ENCODE measurements at regions of chr5 and their contacts with region 1.

Region 1: DNA sequence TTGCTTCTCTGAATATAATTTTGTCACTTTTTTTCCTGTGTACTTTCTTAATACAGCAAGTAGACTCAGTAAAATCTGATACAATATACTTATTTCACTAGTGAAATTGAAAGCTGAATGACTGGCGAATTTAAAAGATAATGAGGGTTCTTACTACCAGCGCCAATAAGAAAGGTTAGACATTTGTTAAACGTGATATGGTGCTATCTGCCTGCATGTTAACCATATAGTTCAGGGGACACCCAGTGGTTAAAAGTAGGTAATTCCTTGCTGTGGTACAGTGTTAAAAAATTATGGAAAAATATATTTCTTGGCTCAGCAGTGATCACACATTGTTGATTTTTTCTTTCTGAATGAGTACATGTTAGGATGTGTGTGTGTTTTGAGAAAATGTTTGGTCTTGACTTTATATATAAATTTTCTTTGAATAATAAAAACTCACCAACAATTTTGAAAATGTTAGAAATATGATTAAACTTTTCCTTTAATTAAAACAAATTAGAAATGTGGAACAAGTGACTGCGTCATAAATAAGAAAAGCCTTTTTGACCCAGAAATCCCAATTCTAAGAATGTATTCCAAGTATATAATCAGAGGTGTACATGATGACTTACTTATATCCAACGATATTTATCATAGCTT is 25.8 kb downstream of the CAST start:
- DNase-seq: peak in 2 of 4 donors; percentile 36 to 46
- ATAC-seq: peak; percentile 84
- H3K4me3 ChIP-seq: no peak overlapping the region
- H3K27ac ChIP-seq: no peak overlapping the region
- H3K4me1 ChIP-seq: peaks cover 6 to 23% of the 10 kb centered on the region in 2 donors
- H3K27me3 ChIP-seq: no peaks in the 10 kb centered on the region
- CTCF ChIP-seq: peak; percentile 32 to 43

Region 2: GRCh38 chr5:96226941-96227552 is 460.9 kb before region 1 on chr5:
- intact Hi-C with region 1: no loop called
- DNase-seq: peak in 2 of 4 donors; percentile 26 to 53
- ATAC-seq: peak; percentile 71
- H3K4me3 ChIP-seq: no peak overlapping the region
- H3K27ac ChIP-seq: peak overlapping the region in 1 of 2 donors; percentile 35
- H3K4me1 ChIP-seq: no peaks in the 10 kb centered on the region
- H3K27me3 ChIP-seq: no peaks in the 10 kb centered on the region
- CTCF ChIP-seq: no peak

Region 3: DNA sequence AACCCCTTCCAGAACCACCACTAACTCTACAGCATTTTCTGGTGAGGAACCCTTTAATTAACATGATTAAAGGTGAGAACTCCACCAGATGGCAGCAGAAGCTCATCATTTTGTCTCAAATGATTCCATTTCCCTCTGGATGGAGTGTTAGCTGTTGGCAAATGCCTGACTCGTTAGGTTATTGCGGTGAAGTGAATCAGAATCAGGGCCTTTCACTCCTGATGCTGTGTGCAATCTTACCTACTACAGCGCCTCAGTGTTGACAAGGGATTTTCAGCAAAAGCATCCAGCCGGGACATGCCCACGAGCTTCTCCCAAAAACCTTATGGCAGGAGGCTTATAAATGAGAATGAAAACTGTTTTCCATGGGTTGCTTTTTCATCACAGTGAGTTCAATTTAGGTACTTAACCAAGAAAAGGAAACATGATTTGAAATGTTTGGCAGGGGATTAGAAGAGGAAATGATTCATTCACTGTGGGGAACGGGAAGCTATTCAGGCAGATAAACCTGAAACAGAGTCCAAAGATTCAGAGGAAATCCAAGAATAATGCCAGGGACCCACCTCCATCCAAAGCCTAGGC is 73.7 kb before region 1 on chr5:
- intact Hi-C with region 1: loop called in 1 of 2 experiments (anchors 10 kb)
- DNase-seq: peak in 3 of 4 donors; percentile 33 to 78 (median 67)
- ATAC-seq: peak; percentile 97
- H3K4me3 ChIP-seq: no peak overlapping the region
- H3K27ac ChIP-seq: peak overlapping the region in 1 of 2 donors; percentile 61
- H3K4me1 ChIP-seq: peaks cover 2 to 17% of the 10 kb centered on the region in 2 donors
- H3K27me3 ChIP-seq: no peaks in the 10 kb centered on the region
- CTCF ChIP-seq: peak; percentile 23 to 35